Activated CD8-positive, alpha-beta memory T cell treated with anti-CD3 and anti-CD28 coated beads, Interleukin-2, amount 10 ng/mL, durations not matched to agents 7 days and 5 days (primary cell): ENCODE measurements at regions of chr19 and their contacts with region 1.

Region 1: GRCh38 chr19:1767464-1767933 is 14.2 kb downstream of the ONECUT3 start:
- DNase-seq: peak; percentile 63
- ATAC-seq: peak; percentile 47
- H3K4me3 Mint-ChIP-seq: no peak overlapping the region
- H3K27ac Mint-ChIP-seq: no peak overlapping the region
- H3K4me1 Mint-ChIP-seq: no peaks in the 10 kb centered on the region
- H3K27me3 Mint-ChIP-seq: peaks cover 79% of the 10 kb centered on the region

Region 2: GRCh38 chr19:1780272-1780958 is 12.9 kb after region 1 on chr19:
- CTCF ChIA-PET with region 1: interaction called, 27 read pairs
- DNase-seq: no peak
- ATAC-seq: no peak
- H3K4me3 Mint-ChIP-seq: no peak overlapping the region
- H3K27ac Mint-ChIP-seq: no peak overlapping the region
- H3K4me1 Mint-ChIP-seq: no peaks in the 10 kb centered on the region
- H3K27me3 Mint-ChIP-seq: peaks cover 41% of the 10 kb centered on the region